Activated naive CD4-positive, alpha-beta T cell treated with anti-CD3 and anti-CD28 coated beads for 36 hours (primary cell): ENCODE measurements at regions of chr9 and their contacts with region 1.

Region 1: GRCh38 chr9:99954819-99955218 is 48.4 kb downstream of the STX17 start:
- DNase-seq: no peak
- H3K4me3 Mint-ChIP-seq: no peak overlapping the region
- H3K27ac Mint-ChIP-seq: peak overlapping the region; percentile 50
- H3K4me1 Mint-ChIP-seq: peaks cover 23% of the 10 kb centered on the region
- H3K27me3 Mint-ChIP-seq: no peaks in the 10 kb centered on the region

Region 2: DNA sequence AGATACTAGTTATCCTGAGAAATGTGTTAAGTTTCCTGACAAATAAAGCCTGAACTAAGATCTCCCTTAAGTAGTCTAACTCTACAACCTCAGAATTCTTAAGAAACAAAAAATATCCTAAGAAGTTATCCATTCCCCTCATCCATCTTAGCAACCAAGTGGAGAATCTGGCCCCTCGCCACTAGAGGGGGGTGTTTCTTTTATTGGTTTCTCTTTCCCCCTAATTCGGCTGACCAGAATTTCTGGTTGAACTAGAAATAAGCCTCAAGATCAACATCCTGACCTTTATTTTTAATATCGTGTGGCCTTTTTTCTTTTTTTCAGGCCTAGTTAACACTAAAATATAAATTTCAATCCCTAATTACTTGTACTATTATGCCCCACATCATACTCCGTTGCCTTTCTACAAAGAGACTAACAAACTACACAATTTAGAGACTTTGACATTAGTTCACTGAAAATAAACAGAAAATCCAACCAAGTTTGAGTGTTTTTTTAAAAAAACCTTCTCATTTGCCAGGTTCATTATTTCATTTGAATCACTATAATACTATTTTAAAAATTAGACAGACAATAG is 147.5 kb before region 1 on chr9:
- CTCF ChIA-PET with region 1: interaction called, 4 read pairs
- intact Hi-C with region 1: loop called (anchors 1 kb)
- DNase-seq: peak; percentile 79
- H3K4me3 Mint-ChIP-seq: no peak overlapping the region
- H3K27ac Mint-ChIP-seq: no peak overlapping the region
- H3K4me1 Mint-ChIP-seq: peaks cover 21% of the 10 kb centered on the region
- H3K27me3 Mint-ChIP-seq: no peaks in the 10 kb centered on the region

Region 3: GRCh38 chr9:99825172-99826046 is 129.4 kb before region 1 on chr9:
- CTCF ChIA-PET with region 1: interaction called, 4 read pairs
- intact Hi-C with region 1: loop called (anchors 1 kb)
- DNase-seq: no peak
- H3K4me3 Mint-ChIP-seq: peak overlapping the region; percentile 94
- H3K27ac Mint-ChIP-seq: no peak overlapping the region
- H3K4me1 Mint-ChIP-seq: peaks cover 57% of the 10 kb centered on the region
- H3K27me3 Mint-ChIP-seq: peaks cover 33% of the 10 kb centered on the region

Region 4: DNA sequence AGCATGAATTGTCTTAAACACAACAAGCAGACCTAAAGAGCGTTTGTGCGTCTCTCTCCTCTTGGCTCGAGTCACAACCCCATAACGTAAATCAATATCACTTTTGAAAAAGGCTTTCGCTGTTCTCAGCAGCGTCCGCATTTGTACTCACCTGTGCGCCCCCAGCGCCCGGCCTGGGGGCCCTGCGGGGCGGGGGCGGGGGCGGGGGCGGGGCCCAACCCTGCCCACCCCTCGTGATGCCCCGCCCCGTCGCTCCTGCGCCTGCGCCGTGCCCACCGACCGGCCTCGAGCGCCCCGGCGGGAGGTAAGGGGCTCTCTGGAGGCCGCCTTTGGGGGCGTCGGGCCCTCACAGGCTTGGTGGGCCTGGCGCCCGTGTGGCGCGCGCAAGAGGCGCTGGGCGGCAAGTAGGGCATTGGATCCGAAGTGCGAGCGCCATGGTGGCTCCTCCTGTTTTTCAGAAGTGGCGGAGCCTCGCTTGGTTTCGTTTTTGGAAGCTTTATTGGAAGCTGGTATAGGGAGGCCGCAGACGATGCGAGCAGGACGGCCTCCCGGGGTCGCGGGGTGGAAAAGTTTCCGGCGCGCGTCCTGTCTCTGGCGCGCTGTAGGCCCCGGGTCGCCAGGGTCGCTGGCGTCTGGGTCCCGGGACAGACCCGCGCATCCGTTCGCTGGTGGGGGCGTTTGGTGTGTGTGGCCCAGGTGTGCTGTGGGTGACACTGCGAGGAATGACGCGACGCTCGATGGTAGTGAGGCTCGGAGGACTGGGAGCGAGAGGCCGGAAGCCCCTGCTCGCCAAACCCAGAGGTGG is 48.2 kb before region 1 on chr9 and contains the start of gene STX17:
- CTCF ChIA-PET with region 1: interaction called, 5 read pairs
- intact Hi-C with region 1: loop called (anchors 2 kb)
- DNase-seq: peak; percentile 75
- H3K4me3 Mint-ChIP-seq: peak within 1 kb of the TSS; percentile 95
- H3K27ac Mint-ChIP-seq: peak within 1 kb of the TSS; percentile 95
- H3K4me1 Mint-ChIP-seq: peaks cover 22% of the 10 kb centered on the region
- H3K27me3 Mint-ChIP-seq: no peaks in the 10 kb centered on the region
- total RNA-seq, gene STX17: 28.1 to 31.6 TPM

Region 5: GRCh38 chr9:100098887-100099721 is 144.3 kb after region 1 on chr9 and contains the starts of genes ERP44 and INVS:
- CTCF ChIA-PET with region 1: no interaction called
- intact Hi-C with region 1: loop called (anchors 5 kb)
- DNase-seq: peak; percentile 99
- H3K4me3 Mint-ChIP-seq: peak within 1 kb of the TSS; percentile 97
- H3K27ac Mint-ChIP-seq: peak within 1 kb of the TSS; percentile 79
- H3K4me1 Mint-ChIP-seq: peaks cover 29% of the 10 kb centered on the region
- H3K27me3 Mint-ChIP-seq: no peaks in the 10 kb centered on the region
- total RNA-seq, gene ERP44: 9.1 to 9.5 TPM
- total RNA-seq, gene INVS: 5.7 to 7.3 TPM

Region 6: DNA sequence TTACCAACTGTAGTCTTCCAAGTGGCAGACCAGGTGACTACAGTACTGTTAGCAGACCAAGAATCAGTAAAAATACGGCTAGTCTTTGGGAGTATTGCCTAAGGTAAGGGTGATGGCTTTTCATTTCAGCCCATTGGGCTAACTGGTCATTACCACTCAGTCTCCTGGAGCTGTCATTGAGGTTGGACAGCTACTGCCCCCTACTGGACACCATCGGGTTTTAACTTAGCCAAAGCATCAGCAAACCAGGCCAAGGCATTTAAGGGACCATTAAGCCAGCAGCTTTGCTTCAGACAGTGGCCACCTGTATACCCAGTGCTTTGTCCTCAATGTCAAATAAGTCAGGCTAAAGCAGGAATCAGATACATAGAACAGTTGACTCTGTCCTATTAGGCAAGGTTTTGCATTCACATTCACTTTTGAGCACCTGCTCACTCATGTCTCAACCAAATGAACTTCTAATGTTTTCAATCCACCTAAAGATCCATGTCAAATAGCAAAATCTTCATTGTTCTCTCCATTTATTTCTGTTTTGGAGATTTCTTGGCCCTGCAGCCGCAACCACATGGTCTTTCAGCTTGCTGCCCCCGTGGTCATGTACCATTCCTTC is 261.5 kb after region 1 on chr9:
- CTCF ChIA-PET with region 1: no interaction called
- intact Hi-C with region 1: loop called (anchors 10 kb)
- DNase-seq: peak; percentile 83
- H3K4me3 Mint-ChIP-seq: no peak overlapping the region
- H3K27ac Mint-ChIP-seq: no peak overlapping the region
- H3K4me1 Mint-ChIP-seq: no peaks in the 10 kb centered on the region
- H3K27me3 Mint-ChIP-seq: no peaks in the 10 kb centered on the region